Left lung (tissue), 14 donors: ENCODE measurements at regions of chr7 and their contacts with region 1.

Region 1: GRCh38 chr7:31735991-31736982 is 49.3 kb downstream of the PPP1R17 start:
- DNase-seq: peak in 3 of 4 donors; percentile 46 to 66 (median 50)
- ATAC-seq: peak; percentile 99
- H3K4me3 ChIP-seq: no peak overlapping the region
- H3K27ac ChIP-seq: no peak overlapping the region
- H3K4me1 ChIP-seq: no peaks in the 10 kb centered on the region
- H3K27me3 ChIP-seq: peaks cover 0 to 7% of the 10 kb centered on the region in 2 donors
- CTCF ChIP-seq: peak; percentile 84 to 85

Region 2: DNA sequence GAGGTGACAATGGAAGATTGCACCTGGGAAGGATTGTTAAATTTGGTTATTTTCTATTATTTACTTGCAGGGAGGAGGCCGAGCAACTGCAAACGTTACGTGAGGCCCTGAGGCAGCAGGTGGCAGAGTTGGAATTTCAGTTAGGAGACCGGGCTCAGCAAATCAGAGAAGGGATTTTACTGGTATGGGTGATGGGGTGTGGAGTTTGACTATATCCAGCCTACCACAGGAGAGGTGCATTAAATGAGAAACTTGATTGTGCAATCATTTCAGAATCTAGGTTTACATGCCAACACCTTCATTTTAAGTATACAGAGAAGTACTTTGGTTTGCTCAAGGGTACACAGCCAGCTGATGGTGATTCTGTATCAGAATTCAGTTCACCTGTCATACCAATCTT is 84.4 kb before region 1 on chr7:
- intact Hi-C with region 1: loop called in 1 of 2 experiments (anchors 10 kb)
- DNase-seq: no peak
- ATAC-seq: peak; percentile 25
- H3K4me3 ChIP-seq: no peak overlapping the region
- H3K27ac ChIP-seq: no peak overlapping the region
- H3K4me1 ChIP-seq: no peaks in the 10 kb centered on the region
- H3K27me3 ChIP-seq: no peaks in the 10 kb centered on the region
- CTCF ChIP-seq: no peak

Region 3: DNA sequence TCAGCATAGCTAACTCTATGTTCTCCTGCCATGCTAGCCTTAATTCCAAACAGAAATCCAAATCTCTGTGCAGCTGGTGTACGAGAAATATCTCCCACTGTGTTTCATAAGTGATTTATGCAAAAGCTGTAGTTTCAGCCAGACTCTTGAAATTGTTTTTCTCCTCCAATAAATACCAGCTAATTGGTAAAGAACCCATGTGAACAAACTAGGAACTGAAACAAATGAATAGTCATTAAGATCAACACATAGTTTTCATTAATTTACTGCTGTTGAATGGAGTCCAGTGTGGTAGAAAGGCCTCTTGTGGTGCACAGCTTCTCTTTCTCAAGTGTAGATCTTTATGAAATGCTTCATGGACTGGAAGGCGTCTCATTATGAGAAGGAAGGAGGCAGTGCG is 30.9 kb before region 1 on chr7:
- intact Hi-C with region 1: no loop called
- DNase-seq: no peak
- ATAC-seq: no peak
- H3K4me3 ChIP-seq: no peak overlapping the region
- H3K27ac ChIP-seq: no peak overlapping the region
- H3K4me1 ChIP-seq: no peaks in the 10 kb centered on the region
- H3K27me3 ChIP-seq: no peaks in the 10 kb centered on the region
- CTCF ChIP-seq: no peak